ENCODE measurements at regions of chr9 and their contacts with region 1.

Region 1: GRCh38 chr9:33130508-33130911 is 36.6 kb downstream of the B4GALT1 start:
- DNase-seq: no peak
- ATAC-seq: peak; percentile 77
- H3K4me3 ChIP-seq: no peak overlapping the region
- H3K4me3 Mint-ChIP-seq: peak overlapping the region in 2 of 10 donors; percentile 46 to 61
- H3K27ac ChIP-seq: no peak overlapping the region
- H3K27ac Mint-ChIP-seq: peak overlapping the region in 8 of 9 donors; percentile 35 to 92 (median 78)
- H3K4me1 ChIP-seq: peaks cover 0 to 4% of the 10 kb centered on the region in 2 donors
- H3K4me1 Mint-ChIP-seq: peaks cover 10 to 41% (median 39%) of the 10 kb centered on the region in 7 donors
- H3K27me3 ChIP-seq: no peaks in the 10 kb centered on the region
- H3K27me3 Mint-ChIP-seq: no peaks in the 10 kb centered on the region

Region 2: DNA sequence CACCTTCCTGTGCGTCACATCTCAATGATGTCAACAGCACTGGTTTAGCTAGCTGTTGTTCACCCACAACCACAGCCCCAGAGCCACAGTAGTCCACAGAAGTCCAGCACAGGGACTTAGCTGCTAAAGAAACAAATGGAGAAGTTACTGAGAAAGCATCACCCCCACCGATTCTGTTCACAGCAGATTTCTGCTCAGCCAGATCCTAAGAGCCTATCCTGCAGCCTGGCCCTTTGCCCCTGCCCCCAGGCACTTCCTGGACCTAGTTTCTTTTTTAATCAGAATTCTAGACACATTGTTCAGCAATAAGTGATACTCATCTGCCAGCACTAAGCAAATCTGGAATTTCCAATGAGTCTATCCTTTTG is 29.2 kb after region 1 on chr9:
- CTCF ChIA-PET with region 1: no interaction called
- POLR2A ChIA-PET with region 1: interaction called, 11 read pairs
- intact Hi-C with region 1: loop called in 1 of 2 experiments (anchors 2 kb)
- DNase-seq: peak in 8 of 9 donors; percentile 59 to 74 (median 66)
- ATAC-seq: peak; percentile 77
- H3K4me3 ChIP-seq: peak overlapping the region; percentile 2
- H3K4me3 Mint-ChIP-seq: peak overlapping the region; percentile 64 to 86 (median 78)
- H3K27ac ChIP-seq: peak overlapping the region; percentile 91
- H3K27ac Mint-ChIP-seq: peak overlapping the region; percentile 88 to 99 (median 97)
- H3K4me1 ChIP-seq: peaks cover 80 to 93% of the 10 kb centered on the region in 2 donors
- H3K4me1 Mint-ChIP-seq: peaks cover 74 to 99% (median 94%) of the 10 kb centered on the region in 7 donors
- H3K27me3 ChIP-seq: no peaks in the 10 kb centered on the region
- H3K27me3 Mint-ChIP-seq: no peaks in the 10 kb centered on the region